CD4-positive, alpha-beta memory T cell (primary cell): ENCODE measurements at regions of chr9 and their contacts with region 1.

Region 1: GRCh38 chr9:126301985-126302603 is 24.5 kb upstream of the MVB12B start:
- DNase-seq: peak; percentile 54 to 70 (median 56)
- H3K4me3 ChIP-seq: no peak overlapping the region
- H3K4me3 Mint-ChIP-seq: no peak overlapping the region
- H3K27ac ChIP-seq: no peak overlapping the region
- H3K27ac Mint-ChIP-seq: peak overlapping the region in 2 of 7 donors; percentile 9 to 11
- H3K4me1 ChIP-seq: no peaks in the 10 kb centered on the region
- H3K4me1 Mint-ChIP-seq: peaks cover 2 to 5% (median 4%) of the 10 kb centered on the region in 4 donors
- H3K27me3 ChIP-seq: no peaks in the 10 kb centered on the region
- H3K27me3 Mint-ChIP-seq: no peaks in the 10 kb centered on the region

Region 2: DNA sequence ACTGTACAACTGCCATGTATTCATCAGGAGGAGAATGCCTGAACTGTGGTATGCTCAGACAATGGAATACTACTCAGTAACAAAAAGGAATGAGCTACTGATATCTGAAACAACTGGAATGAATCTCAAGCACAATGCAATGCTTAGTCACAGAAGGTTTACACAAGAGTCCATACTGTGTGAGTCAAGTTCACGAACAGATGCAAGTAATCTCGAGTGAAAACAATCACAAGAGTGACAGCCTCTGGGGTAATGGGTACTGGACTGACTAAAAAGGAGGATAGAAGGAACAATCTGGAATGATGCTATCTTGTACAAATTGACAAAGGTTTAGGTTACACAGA is 1341.7 kb before region 1 on chr9:
- CTCF ChIA-PET with region 1: no interaction called
- POLR2A ChIA-PET with region 1: no interaction called
- intact Hi-C with region 1: no loop called
- DNase-seq: no peak
- H3K4me3 ChIP-seq: no peak overlapping the region
- H3K4me3 Mint-ChIP-seq: no peak overlapping the region
- H3K27ac ChIP-seq: no peak overlapping the region
- H3K27ac Mint-ChIP-seq: no peak overlapping the region
- H3K4me1 ChIP-seq: peaks cover 19% of the 10 kb centered on the region
- H3K4me1 Mint-ChIP-seq: peaks cover 16 to 19% (median 17%) of the 10 kb centered on the region in 4 donors
- H3K27me3 ChIP-seq: no peaks in the 10 kb centered on the region
- H3K27me3 Mint-ChIP-seq: no peaks in the 10 kb centered on the region

Region 3: GRCh38 chr9:125932017-125932416 is 370.1 kb before region 1 on chr9:
- CTCF ChIA-PET with region 1: no interaction called
- POLR2A ChIA-PET with region 1: no interaction called
- intact Hi-C with region 1: no loop called
- DNase-seq: no peak
- H3K4me3 ChIP-seq: no peak overlapping the region
- H3K4me3 Mint-ChIP-seq: no peak overlapping the region
- H3K27ac ChIP-seq: no peak overlapping the region
- H3K27ac Mint-ChIP-seq: no peak overlapping the region
- H3K4me1 ChIP-seq: no peaks in the 10 kb centered on the region
- H3K4me1 Mint-ChIP-seq: no peaks in the 10 kb centered on the region
- H3K27me3 ChIP-seq: no peaks in the 10 kb centered on the region
- H3K27me3 Mint-ChIP-seq: no peaks in the 10 kb centered on the region

Region 4: GRCh38 chr9:126317513-126317912 is 15.4 kb after region 1 on chr9:
- CTCF ChIA-PET with region 1: interaction called, 14 read pairs
- POLR2A ChIA-PET with region 1: no interaction called
- intact Hi-C with region 1: no loop called
- DNase-seq: peak; percentile 35 to 52 (median 40)
- H3K4me3 ChIP-seq: no peak overlapping the region
- H3K4me3 Mint-ChIP-seq: no peak overlapping the region
- H3K27ac ChIP-seq: no peak overlapping the region
- H3K27ac Mint-ChIP-seq: peak overlapping the region in 1 of 7 donors; percentile 59
- H3K4me1 ChIP-seq: peaks cover 4% of the 10 kb centered on the region
- H3K4me1 Mint-ChIP-seq: peaks cover 2 to 12% (median 9%) of the 10 kb centered on the region in 4 donors
- H3K27me3 ChIP-seq: no peaks in the 10 kb centered on the region
- H3K27me3 Mint-ChIP-seq: peaks cover 0 to 2% of the 10 kb centered on the region in 2 donors

Region 5: GRCh38 chr9:126337729-126338372 is 35.8 kb after region 1 on chr9:
- CTCF ChIA-PET with region 1: no interaction called
- POLR2A ChIA-PET with region 1: no interaction called
- intact Hi-C with region 1: no loop called
- DNase-seq: no peak
- H3K4me3 ChIP-seq: no peak overlapping the region
- H3K4me3 Mint-ChIP-seq: no peak overlapping the region
- H3K27ac ChIP-seq: no peak overlapping the region
- H3K27ac Mint-ChIP-seq: peak overlapping the region in 1 of 7 donors; percentile 30
- H3K4me1 ChIP-seq: no peaks in the 10 kb centered on the region
- H3K4me1 Mint-ChIP-seq: peaks cover 0 to 23% (median 8%) of the 10 kb centered on the region in 4 donors
- H3K27me3 ChIP-seq: no peaks in the 10 kb centered on the region
- H3K27me3 Mint-ChIP-seq: no peaks in the 10 kb centered on the region